Dorsolateral prefrontal cortex (tissue), 120 donors: ENCODE measurements at regions of chr2 and their contacts with region 1.

Region 1: GRCh38 chr2:65432227-65433190 is at the start of gene SPRED2:
- DNase-seq: peak; percentile 62 to 89 (median 87)
- H3K4me3 ChIP-seq: peak within 1 kb of the TSS; percentile 62 to 98 (median 87)
- H3K27ac ChIP-seq: peak within 1 kb of the TSS; percentile 10 to 95 (median 89)
- H3K27me3 ChIP-seq: no peaks in the 10 kb centered on the region
- CTCF ChIP-seq: peak in 42 of 56 donors; percentile 5 to 46 (median 26)
- total RNA-seq, gene SPRED2: 28.2 to 82.4 (median 50.7) TPM

Region 2: GRCh38 chr2:65064728-65065552 is 367.6 kb before region 1 on chr2:
- intact Hi-C with region 1: loop called in 1 of 2 experiments (anchors 5 kb)
- DNase-seq: peak in 6 of 10 donors; percentile 59 to 78 (median 68)
- H3K4me3 ChIP-seq: peak overlapping the region in 46 of 59 donors; percentile 1 to 54 (median 20)
- H3K27ac ChIP-seq: peak overlapping the region; percentile 13 to 88 (median 75)
- H3K27me3 ChIP-seq: no peaks in the 10 kb centered on the region
- CTCF ChIP-seq: peak; percentile 50 to 79 (median 68)

Region 3: DNA sequence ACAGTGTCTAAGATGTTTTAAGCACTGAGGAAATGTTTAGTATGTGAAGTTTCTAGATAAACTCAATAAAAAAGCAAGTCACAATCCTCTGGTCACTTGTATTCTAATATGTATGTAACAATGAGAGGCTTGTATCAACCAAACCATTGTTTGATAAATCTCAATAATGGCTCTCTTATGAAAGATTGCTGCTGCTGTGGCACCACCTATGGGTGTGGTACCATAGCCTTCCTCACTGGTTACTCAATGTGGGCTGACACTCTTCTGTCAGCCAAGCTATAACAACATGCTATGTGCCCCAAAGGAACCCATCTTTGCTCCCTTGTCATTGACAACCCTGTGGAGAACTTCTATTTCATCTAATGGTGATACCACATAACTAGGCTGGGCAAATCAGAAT is 290.0 kb before region 1 on chr2:
- intact Hi-C with region 1: no loop called
- DNase-seq: peak in 2 of 10 donors; percentile 58 to 65
- H3K4me3 ChIP-seq: peak overlapping the region in 4 of 59 donors; percentile 3 to 37 (median 18)
- H3K27ac ChIP-seq: peak overlapping the region in 37 of 59 donors; percentile 1 to 84 (median 54)
- H3K27me3 ChIP-seq: no peaks in the 10 kb centered on the region
- CTCF ChIP-seq: peak in 52 of 56 donors; percentile 10 to 78 (median 48)

Region 4: DNA sequence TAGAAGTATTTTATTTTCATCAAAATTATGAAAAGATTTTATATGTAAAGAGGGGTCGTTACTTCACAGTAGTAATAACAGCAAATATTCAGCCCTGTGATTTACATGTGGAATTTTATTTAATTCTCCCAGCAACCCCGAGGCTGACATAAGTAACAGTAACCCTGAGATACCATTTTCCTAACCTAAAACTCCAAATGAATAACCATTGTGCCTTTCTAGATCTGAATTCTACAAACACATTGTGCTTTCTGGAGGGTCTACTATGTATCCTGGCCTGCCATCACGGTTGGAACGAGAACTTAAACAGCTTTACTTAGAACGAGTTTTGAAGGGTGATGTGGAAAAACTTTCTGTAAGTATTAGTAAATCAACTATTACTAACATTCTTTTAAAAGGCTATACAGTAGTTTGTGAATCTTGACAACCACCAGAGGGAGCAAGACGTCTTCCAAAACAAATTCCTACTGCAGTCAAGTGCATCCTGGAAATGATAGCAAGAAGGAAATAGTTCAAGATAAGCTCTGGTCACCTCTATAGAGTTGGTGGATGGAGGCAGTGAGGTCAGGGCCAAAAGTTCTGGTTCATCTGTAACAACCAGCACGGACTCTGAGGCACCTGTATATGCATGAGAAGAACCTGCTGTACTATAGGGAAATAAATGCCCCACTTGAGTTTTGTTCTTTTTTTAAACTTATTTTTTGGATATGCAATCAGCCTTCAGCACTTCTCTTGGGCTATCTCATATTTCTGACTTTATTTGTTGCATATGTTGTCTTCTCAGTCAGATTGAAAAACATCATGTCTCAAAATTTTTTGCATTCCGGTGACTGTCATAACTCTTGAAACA is 167.5 kb before region 1 on chr2:
- intact Hi-C with region 1: loop called (anchors 5 to 10 kb)
- DNase-seq: peak in 3 of 10 donors; percentile 9 to 50 (median 37)
- H3K4me3 ChIP-seq: no peak overlapping the region
- H3K27ac ChIP-seq: no peak overlapping the region
- H3K27me3 ChIP-seq: no peaks in the 10 kb centered on the region
- CTCF ChIP-seq: peak; percentile 63 to 92 (median 82)

Region 5: GRCh38 chr2:65361623-65362022 is 70.9 kb before region 1 on chr2:
- intact Hi-C with region 1: loop called in 1 of 2 experiments (anchors 5 kb)
- DNase-seq: peak in 1 of 10 donors; percentile 31
- H3K4me3 ChIP-seq: peak overlapping the region in 11 of 59 donors; percentile 1 to 28 (median 11)
- H3K27ac ChIP-seq: peak overlapping the region in 22 of 59 donors; percentile 0 to 55 (median 36)
- H3K27me3 ChIP-seq: no peaks in the 10 kb centered on the region
- CTCF ChIP-seq: no peak

Region 6: DNA sequence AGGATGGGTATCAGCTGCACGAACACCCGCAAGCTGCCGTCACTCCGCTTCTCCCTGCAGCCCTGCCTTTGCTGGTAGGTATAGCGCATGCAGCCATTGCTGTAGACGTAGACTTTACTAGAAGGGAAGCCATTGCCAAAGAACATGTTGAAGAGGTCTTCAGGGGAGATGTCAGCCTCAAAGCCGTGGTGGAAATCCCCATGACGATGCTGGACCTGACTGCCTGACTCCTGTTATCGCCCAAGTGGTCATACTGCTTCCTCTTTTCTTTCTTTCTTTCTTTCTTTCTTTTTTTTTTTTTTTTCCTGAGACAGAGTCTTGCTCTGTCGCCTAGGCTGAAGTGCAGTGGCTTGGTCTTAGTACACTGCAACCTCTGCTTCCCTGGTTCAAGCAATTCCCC is 68.6 kb after region 1 on chr2:
- intact Hi-C with region 1: loop called in 1 of 2 experiments (anchors 5 kb)
- DNase-seq: no peak
- H3K4me3 ChIP-seq: no peak overlapping the region
- H3K27ac ChIP-seq: no peak overlapping the region
- H3K27me3 ChIP-seq: no peaks in the 10 kb centered on the region
- CTCF ChIP-seq: no peak

Region 7: GRCh38 chr2:65576861-65577601 is 144.5 kb after region 1 on chr2:
- intact Hi-C with region 1: loop called in 1 of 2 experiments (anchors 5 kb)
- DNase-seq: no peak
- H3K4me3 ChIP-seq: no peak overlapping the region
- H3K27ac ChIP-seq: no peak overlapping the region
- H3K27me3 ChIP-seq: no peaks in the 10 kb centered on the region
- CTCF ChIP-seq: no peak

Region 8: DNA sequence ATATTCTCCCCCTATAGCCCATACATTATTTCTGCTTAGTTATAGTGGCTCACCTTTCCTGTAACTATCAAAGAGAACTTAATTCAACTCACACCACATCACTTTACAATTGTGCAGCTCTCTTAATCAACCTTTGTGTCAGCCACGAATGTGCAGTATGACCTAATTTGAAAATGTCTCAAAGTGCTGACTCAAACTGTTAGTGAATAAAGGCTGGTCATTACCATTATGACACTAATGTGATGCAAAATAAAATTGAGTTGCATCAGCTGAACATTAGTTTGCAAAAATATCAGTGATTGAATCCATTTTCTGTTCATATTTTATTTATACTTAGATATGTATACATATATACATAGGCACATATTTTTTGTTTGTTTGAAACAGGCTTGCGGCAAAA is 1254.2 kb after region 1 on chr2:
- intact Hi-C with region 1: no loop called
- DNase-seq: no peak
- H3K4me3 ChIP-seq: no peak overlapping the region
- H3K27ac ChIP-seq: no peak overlapping the region
- H3K27me3 ChIP-seq: peaks cover 0 to 20% (median 0%) of the 10 kb centered on the region in 45 donors
- CTCF ChIP-seq: no peak